WTC11 (cell line): ENCODE measurements at regions of chr20 and their contacts with region 1.

Region 1: DNA sequence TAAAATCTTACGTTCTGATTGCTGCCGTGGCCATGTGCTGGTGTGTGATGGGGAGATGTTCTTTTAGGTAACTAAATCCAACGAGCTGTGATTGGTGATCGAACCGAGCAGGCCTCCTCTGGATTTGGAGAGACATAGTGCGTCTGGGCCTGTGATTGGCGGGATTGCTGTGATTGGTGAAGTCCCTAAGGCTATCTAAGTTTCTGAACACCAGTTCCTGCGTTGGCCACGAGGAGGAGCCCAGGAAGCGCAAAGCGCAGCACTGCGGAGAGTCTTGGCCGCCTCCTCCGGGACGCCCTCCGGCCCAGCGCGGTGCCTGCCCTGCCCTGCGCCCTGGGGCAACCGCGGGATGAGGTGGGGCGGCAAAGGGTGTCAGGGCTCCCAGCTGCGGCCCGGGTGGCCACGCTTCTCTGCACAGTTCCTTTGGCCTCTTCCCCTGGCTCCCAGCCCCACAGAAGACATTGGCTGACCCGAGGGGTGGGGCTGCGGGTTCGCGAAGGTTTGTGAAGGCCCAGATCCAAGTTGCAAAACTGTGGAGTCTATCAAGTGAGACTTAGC is 33.0 kb downstream of the HNF4A start:
- DNase-seq: peak; percentile 95
- ATAC-seq: peak; percentile 96
- H3K4me3 Mint-ChIP-seq: peak overlapping the region; percentile 57
- H3K27ac Mint-ChIP-seq: peak overlapping the region; percentile 11; the same call in 1 of the 2 replicates
- H3K4me1 Mint-ChIP-seq: peaks cover 7% of the 10 kb centered on the region
- H3K27me3 Mint-ChIP-seq: peaks cover 13% of the 10 kb centered on the region
- CTCF ChIP-seq: peak; percentile 78

Region 2: DNA sequence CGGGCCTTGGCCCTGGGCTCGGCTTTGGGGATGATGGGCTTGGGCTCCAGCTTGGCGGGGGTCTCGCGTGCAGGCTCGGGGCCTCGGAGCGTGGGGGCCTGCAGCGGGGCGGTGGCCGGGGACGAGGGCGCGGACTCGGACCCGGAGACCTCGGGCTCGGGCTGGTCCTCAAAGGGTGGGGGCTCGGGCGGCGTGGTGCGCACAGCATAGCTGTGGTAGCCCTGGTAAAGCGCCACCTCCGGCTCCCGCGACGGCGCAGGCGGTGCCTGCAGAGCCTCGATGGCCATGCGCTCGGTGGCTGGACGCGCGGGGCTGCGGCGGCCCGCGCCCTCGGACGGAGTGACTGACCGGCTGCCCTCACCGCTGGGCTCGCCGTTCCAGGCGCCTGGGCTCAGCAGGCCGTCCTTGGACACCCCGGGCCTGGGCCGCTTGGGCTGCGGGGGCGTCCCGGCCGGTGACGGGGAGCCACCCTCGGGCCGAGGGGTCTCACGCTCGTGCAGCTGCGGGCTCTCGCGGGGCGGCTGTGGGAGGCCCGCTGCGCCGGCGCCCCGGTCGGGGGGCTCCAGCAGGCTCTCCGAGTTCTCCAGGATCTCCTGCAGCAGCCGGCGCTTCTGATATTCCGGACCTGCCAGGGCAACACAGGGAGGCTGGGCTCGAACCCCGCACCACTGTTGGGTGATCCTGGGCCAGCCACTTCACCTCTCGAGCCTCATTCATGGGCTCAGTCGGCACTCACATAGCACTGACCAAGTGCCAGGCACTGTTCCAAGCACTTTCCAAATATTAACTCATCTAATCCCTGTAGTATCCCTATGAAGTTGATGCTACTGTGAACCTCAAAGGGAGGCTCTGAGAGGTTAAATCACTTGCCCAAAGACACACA is 272.5 kb before region 1 on chr20:
- CTCF ChIA-PET with region 1: interaction called, 12 read pairs
- POLR2A ChIA-PET with region 1: no interaction called
- DNase-seq: no peak
- ATAC-seq: no peak
- H3K4me3 Mint-ChIP-seq: no peak overlapping the region
- H3K27ac Mint-ChIP-seq: no peak overlapping the region
- H3K4me1 Mint-ChIP-seq: 0 out of 2 replicates have a peak, but pooled peaks cover 5% of the 10 kb centered on the region
- H3K27me3 Mint-ChIP-seq: no peaks in the 10 kb centered on the region; the same call in 1 of the 2 replicates
- CTCF ChIP-seq: no peak

Region 3: DNA sequence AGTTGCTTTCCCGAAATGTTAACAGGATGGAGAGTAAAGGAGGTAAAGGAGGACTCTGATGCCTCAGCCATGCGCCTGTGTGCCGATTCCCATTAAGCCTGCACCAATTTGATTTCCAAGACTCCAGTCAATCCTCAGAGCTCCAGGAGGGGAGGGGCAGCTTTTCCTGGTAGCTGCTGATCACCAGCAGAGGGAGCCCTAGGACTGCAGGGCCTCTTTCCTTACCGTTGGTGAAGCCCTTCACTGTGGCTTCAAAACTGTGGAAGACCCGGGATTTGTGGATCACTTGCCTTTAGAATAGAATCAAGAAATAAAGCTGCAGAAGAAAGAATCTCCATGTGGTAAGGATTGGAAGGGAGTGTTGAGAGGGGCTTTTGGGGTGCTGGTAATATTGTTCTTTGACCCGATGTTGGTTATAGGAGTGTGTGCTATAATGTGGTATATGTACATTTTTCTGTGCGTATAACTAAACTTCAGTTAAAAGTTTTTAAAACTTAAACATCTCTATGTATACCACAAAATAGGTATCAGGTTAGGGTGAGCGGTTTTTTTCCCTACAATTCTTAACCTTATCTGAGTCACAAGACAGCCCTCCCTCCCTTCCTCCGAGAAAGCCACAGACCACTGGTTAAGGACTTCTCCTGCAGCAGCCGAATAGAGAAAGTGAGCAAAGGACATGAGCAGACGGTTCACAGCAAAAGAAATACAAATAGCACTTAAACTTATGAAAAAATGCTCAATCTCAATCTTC is 171.0 kb before region 1 on chr20:
- CTCF ChIA-PET with region 1: interaction called, 77 read pairs
- POLR2A ChIA-PET with region 1: no interaction called
- DNase-seq: peak; percentile 82
- ATAC-seq: peak; percentile 84
- H3K4me3 Mint-ChIP-seq: no peak overlapping the region
- H3K27ac Mint-ChIP-seq: peak overlapping the region; percentile 58; the same call in 1 of the 2 replicates
- H3K4me1 Mint-ChIP-seq: peaks cover 21% of the 10 kb centered on the region
- H3K27me3 Mint-ChIP-seq: no peaks in the 10 kb centered on the region
- CTCF ChIP-seq: peak; percentile 91

Region 4: GRCh38 chr20:44247586-44248409 is 140.7 kb before region 1 on chr20:
- CTCF ChIA-PET with region 1: interaction called, 14 read pairs
- POLR2A ChIA-PET with region 1: no interaction called
- DNase-seq: peak; percentile 91
- ATAC-seq: peak; percentile 92
- H3K4me3 Mint-ChIP-seq: peak overlapping the region; percentile 78
- H3K27ac Mint-ChIP-seq: no peak overlapping the region
- H3K4me1 Mint-ChIP-seq: peaks cover 7% of the 10 kb centered on the region; the same call in 1 of the 2 replicates
- H3K27me3 Mint-ChIP-seq: peaks cover 13% of the 10 kb centered on the region
- CTCF ChIP-seq: peak; percentile 55; the same call in 1 of the 2 replicates

Region 5: GRCh38 chr20:44326391-44327159 is 62.0 kb before region 1 on chr20:
- CTCF ChIA-PET with region 1: interaction called, 10 read pairs
- POLR2A ChIA-PET with region 1: no interaction called
- DNase-seq: peak; percentile 72
- ATAC-seq: peak; percentile 65
- H3K4me3 Mint-ChIP-seq: peak overlapping the region; percentile 38
- H3K27ac Mint-ChIP-seq: no peak overlapping the region
- H3K4me1 Mint-ChIP-seq: peaks cover 15% of the 10 kb centered on the region
- H3K27me3 Mint-ChIP-seq: no peaks in the 10 kb centered on the region
- CTCF ChIP-seq: no peak

Region 6: DNA sequence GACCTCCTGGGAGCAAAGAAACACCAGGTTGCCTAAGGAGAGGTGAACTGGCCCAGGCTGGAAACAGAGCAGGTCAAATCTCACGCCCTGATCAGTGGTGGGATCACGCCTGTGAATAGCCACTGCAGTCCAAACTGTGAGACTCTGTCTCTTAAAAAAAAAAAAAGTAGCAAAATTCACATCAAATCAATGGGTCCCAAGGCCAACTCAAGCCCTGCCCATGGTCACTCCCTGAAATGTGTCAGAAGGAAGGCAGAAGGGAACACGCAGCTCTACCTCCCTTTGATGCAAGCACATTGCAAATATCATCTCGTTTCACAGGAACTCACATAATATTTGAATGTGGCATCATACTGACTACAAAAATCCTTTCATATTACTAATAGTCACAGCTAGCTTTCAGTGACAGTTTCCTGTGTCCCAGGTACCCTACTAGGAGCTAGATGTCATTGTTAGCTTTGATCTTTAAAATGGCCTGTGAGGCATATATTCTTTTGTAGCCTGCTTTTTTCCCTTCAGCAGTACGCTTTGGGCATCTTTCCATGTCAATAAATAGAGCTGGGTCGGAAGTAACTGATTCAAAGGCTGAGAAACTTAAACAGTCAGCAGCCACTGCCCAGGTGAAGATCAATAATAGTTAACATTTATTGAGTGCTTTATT is 72.7 kb after region 1 on chr20:
- CTCF ChIA-PET with region 1: interaction called, 10 read pairs
- POLR2A ChIA-PET with region 1: no interaction called
- DNase-seq: no peak
- ATAC-seq: no peak
- H3K4me3 Mint-ChIP-seq: no peak overlapping the region
- H3K27ac Mint-ChIP-seq: no peak overlapping the region
- H3K4me1 Mint-ChIP-seq: peaks cover 10% of the 10 kb centered on the region
- H3K27me3 Mint-ChIP-seq: no peaks in the 10 kb centered on the region; the same call in 1 of the 2 replicates
- CTCF ChIP-seq: no peak

Region 7: DNA sequence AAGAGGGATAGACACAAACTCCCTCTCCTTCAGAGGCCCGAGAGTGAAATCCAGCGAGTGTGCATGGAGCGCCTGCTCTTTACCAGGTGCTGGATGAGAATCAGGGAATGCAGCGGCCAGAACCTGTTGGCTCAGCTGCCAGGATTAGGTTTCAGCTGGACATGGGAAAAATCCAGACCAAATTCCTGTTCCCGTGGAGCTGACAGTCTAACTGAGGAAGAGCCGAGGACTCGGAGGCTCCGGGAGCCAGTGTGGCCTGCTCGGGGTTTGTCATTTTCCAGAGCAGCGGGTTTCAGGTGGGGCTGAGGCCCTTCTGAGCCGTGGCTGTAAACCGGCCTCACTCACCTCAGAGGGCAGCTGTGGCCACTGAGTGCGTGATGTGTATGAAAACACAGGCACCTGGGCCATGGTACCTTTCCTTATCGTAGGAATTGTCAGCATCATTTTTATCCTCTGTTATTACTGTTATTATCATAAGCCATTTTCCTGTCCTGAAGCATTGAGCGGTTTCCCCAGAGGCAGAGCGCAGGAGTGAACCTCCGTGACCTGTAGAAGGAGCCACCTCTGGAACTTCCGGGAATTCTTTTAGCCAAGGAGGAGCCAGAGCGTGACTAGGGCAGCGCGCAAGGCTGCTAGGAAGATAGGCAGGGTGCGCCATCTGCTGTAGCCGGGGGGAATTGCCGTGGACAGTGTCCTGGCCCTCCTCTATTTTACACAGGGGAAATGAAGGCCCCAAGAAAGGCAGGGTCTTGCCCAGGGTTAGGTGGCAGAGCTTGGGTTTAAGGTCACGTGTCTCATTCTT is 221.2 kb after region 1 on chr20:
- CTCF ChIA-PET with region 1: interaction called, 28 read pairs
- POLR2A ChIA-PET with region 1: no interaction called
- DNase-seq: peak; percentile 95
- ATAC-seq: peak; percentile 97
- H3K4me3 Mint-ChIP-seq: peak overlapping the region; percentile 37; the same call in 1 of the 2 replicates
- H3K27ac Mint-ChIP-seq: peak overlapping the region; percentile 81
- H3K4me1 Mint-ChIP-seq: peaks cover 11% of the 10 kb centered on the region
- H3K27me3 Mint-ChIP-seq: peaks cover 10% of the 10 kb centered on the region
- CTCF ChIP-seq: peak; percentile 88